AG04450 (cell line): ENCODE measurements at regions of chr11 and their contacts with region 1.

Region 1: GRCh38 chr11:116787786-116788486 is at the start of gene ZPR1:
- DNase-seq: no peak
- H3K4me3 ChIP-seq: peak within 1 kb of the TSS; percentile 89
- H3K27ac ChIP-seq: peak within 1 kb of the TSS; percentile 65
- H3K27me3 ChIP-seq: no peaks in the 10 kb centered on the region
- CTCF ChIP-seq: peak; percentile 7; the same call in 1 of the 2 replicates
- polyA plus RNA-seq, gene ZPR1: 57.1 and 57.7 TPM in 2 replicates

Region 2: DNA sequence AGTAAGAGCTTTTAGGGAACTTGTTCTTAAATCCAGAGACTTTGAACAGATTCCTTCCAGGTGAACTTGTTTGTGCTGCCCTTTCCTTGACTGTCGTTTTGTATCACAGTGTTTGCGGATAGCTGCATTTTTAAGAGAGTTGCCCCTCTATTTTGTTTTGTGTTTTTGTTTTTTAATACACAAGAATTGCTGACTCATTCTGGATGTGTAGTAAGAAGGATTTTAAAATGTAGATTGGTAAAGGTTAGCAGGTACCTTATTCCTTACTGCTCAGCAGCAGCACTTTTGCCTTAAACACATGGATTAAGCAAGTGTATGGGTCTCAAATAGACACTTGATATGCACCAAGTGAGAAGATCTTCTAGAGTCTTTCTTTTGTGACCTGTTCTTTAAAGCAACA is 12.7 kb after region 1 on chr11:
- CTCF ChIA-PET with region 1: interaction called, 10 read pairs
- POLR2A ChIA-PET with region 1: no interaction called
- DNase-seq: no peak
- H3K4me3 ChIP-seq: no peak overlapping the region
- H3K27ac ChIP-seq: no peak overlapping the region
- H3K27me3 ChIP-seq: peaks cover 14% of the 10 kb centered on the region
- CTCF ChIP-seq: no peak

Region 3: GRCh38 chr11:116853461-116854073 is 65.6 kb after region 1 on chr11:
- CTCF ChIA-PET with region 1: interaction called, 16 read pairs
- POLR2A ChIA-PET with region 1: no interaction called
- DNase-seq: peak; percentile 74
- H3K4me3 ChIP-seq: no peak overlapping the region
- H3K27ac ChIP-seq: peak overlapping the region; percentile 69
- H3K27me3 ChIP-seq: no peaks in the 10 kb centered on the region
- CTCF ChIP-seq: no peak

Region 4: GRCh38 chr11:117143871-117144476 is 356.0 kb after region 1 on chr11 and contains the start of gene PAFAH1B2:
- CTCF ChIA-PET with region 1: interaction called, 14 read pairs
- POLR2A ChIA-PET with region 1: interaction called, 3 read pairs
- DNase-seq: peak; percentile 60
- H3K4me3 ChIP-seq: peak within 1 kb of the TSS; percentile 95
- H3K27ac ChIP-seq: peak within 1 kb of the TSS; percentile 82
- H3K27me3 ChIP-seq: no peaks in the 10 kb centered on the region
- CTCF ChIP-seq: no peak
- polyA plus RNA-seq, gene PAFAH1B2: 46.1 and 48.8 TPM in 2 replicates

Region 5: GRCh38 chr11:117226388-117227385 is 438.8 kb after region 1 on chr11:
- CTCF ChIA-PET with region 1: interaction called, 12 read pairs
- POLR2A ChIA-PET with region 1: interaction called, 11 read pairs
- DNase-seq: no peak
- H3K4me3 ChIP-seq: no peak overlapping the region
- H3K27ac ChIP-seq: peak overlapping the region; percentile 11
- H3K27me3 ChIP-seq: no peaks in the 10 kb centered on the region
- CTCF ChIP-seq: peak; percentile 79